ENCODE measurements at regions of chr19 and their contacts with region 1.

Region 1: GRCh38 chr19:4284176-4284958 is 5.3 kb downstream of the SHD start:
- DNase-seq: no peak
- H3K4me3 ChIP-seq: no peak overlapping the region
- H3K27ac ChIP-seq: no peak overlapping the region
- H3K27me3 ChIP-seq: peaks cover 30% of the 10 kb centered on the region
- CTCF ChIP-seq: no peak

Region 2: GRCh38 chr19:4390567-4391305 is 106.4 kb after region 1 on chr19:
- CTCF ChIA-PET with region 1: no interaction called
- POLR2A ChIA-PET with region 1: interaction called, 11 read pairs
- DNase-seq: no peak
- H3K4me3 ChIP-seq: peak overlapping the region; percentile 25
- H3K27ac ChIP-seq: peak overlapping the region; percentile 75
- H3K27me3 ChIP-seq: no peaks in the 10 kb centered on the region
- CTCF ChIP-seq: no peak